Body of pancreas (tissue), 4 donors: ENCODE measurements at regions of chr7 and their contacts with region 1.

Region 1: DNA sequence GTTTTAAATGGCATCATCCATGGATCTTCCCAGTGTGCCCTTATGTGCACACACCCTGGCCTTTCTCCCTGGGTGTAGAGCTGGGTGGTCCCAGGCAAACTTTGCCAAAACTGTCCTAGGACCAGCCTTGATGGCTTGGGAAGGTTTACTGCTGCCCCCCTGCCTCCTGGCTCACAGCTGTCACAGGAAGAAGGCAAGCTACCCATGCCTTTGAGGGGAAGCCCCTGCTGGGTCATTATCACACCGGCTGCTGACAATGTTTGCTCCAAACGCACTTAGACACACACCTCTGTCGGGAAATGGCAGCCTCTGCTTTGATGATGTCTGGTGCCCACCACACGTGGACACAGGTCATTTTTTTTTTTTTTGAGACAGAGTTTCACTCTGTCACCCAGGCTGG is 25.2 kb upstream of the FIGNL1 start:
- DNase-seq: peak in 1 of 4 donors; percentile 20
- ATAC-seq: no peak
- H3K4me3 ChIP-seq: no peak overlapping the region
- H3K27ac ChIP-seq: no peak overlapping the region
- H3K4me1 ChIP-seq: no peaks in the 10 kb centered on the region
- H3K27me3 ChIP-seq: no peaks in the 10 kb centered on the region
- CTCF ChIP-seq: no peak
- POLR2A ChIP-seq: no peak

Region 2: GRCh38 chr7:50085344-50085743 is 390.0 kb before region 1 on chr7:
- intact Hi-C with region 1: no loop called
- DNase-seq: no peak
- ATAC-seq: no peak
- H3K4me3 ChIP-seq: no peak overlapping the region
- H3K27ac ChIP-seq: no peak overlapping the region
- H3K4me1 ChIP-seq: no peaks in the 10 kb centered on the region
- H3K27me3 ChIP-seq: no peaks in the 10 kb centered on the region
- CTCF ChIP-seq: no peak
- POLR2A ChIP-seq: no peak

Region 3: GRCh38 chr7:50595491-50596102 is 120.3 kb after region 1 on chr7:
- intact Hi-C with region 1: loop called (anchors 10 kb)
- DNase-seq: peak in 2 of 4 donors; percentile 49 to 52
- ATAC-seq: peak; percentile 60
- H3K4me3 ChIP-seq: no peak overlapping the region
- H3K27ac ChIP-seq: no peak overlapping the region
- H3K4me1 ChIP-seq: no peaks in the 10 kb centered on the region
- H3K27me3 ChIP-seq: no peaks in the 10 kb centered on the region
- CTCF ChIP-seq: peak in 6 of 7 experiments; percentile 19 to 71 (median 56)
- POLR2A ChIP-seq: no peak

Region 4: DNA sequence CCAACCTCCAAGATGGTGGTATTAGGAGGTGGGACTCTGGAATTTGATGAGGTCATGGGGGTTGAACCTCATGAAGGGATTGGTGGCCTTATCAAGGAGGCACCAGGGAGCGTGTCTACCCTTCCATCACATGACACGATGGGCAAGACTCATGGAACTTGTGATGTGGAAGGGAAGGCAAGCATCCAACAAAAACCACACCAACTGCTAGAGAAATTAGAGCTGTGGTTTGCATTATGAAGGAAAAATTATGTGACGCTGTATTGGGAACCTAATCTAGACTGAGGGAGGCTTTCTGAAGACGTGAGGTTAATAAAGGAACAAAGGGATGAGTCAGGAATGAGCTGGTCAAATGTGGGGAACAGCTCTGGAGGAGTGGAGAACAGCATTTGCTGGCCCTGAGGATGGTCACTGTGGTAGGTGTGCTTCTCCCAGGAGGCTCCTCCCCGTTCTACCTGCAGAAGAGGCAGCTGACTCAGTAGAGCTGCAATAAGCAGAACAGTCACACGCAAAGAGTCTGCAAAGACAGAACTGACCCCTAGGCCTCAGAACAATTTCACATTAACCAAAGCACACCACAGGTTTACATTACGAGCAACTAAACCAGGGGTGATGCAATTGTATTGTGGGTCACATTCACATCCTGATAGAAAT is 544.0 kb after region 1 on chr7:
- intact Hi-C with region 1: no loop called
- DNase-seq: peak in 3 of 4 donors; percentile 39 to 63 (median 62)
- ATAC-seq: no peak
- H3K4me3 ChIP-seq: no peak overlapping the region
- H3K27ac ChIP-seq: peak overlapping the region; percentile 76 to 89 (median 82)
- H3K4me1 ChIP-seq: peaks cover 38% of the 10 kb centered on the region
- H3K27me3 ChIP-seq: no peaks in the 10 kb centered on the region
- CTCF ChIP-seq: peak in 2 of 7 experiments; percentile 2 to 16
- POLR2A ChIP-seq: peak in 1 of 3 donors; percentile 47

Region 5: DNA sequence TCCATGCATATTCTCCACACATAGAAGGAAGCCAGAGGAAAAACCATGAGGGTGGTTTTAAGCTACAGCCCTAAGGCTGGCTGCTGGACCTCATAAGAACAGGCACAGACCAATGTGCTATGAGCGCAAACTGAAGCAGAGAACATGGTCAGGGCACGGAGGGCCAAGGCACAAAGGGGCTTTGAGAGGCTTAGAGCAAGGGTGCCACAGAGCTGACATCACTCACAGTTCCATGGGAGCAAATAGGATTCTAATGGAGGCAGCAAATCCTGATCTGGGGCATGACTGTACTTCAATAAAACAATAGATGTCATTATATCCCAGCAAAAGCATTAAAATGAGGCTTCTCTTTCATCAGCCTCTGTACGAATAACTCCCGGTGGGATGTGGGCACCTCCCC is 678.9 kb after region 1 on chr7:
- intact Hi-C with region 1: loop called (anchors 10 kb)
- DNase-seq: no peak
- ATAC-seq: no peak
- H3K4me3 ChIP-seq: no peak overlapping the region
- H3K27ac ChIP-seq: no peak overlapping the region
- H3K4me1 ChIP-seq: no peaks in the 10 kb centered on the region
- H3K27me3 ChIP-seq: no peaks in the 10 kb centered on the region
- CTCF ChIP-seq: no peak
- POLR2A ChIP-seq: no peak